ENCODE measurements at regions of chr12 and their contacts with region 1.

Region 1: GRCh38 chr12:6167327-6168259 is 32.6 kb upstream of the CD9 start:
- DNase-seq: peak; percentile 82
- CTCF ChIP-seq: no peak

Region 2: GRCh38 chr12:6416596-6416995 is 249.0 kb after region 1 on chr12:
- CTCF ChIA-PET with region 1: no interaction called
- POLR2A ChIA-PET with region 1: interaction called, 12 read pairs
- DNase-seq: no peak
- CTCF ChIP-seq: no peak